Lower leg skin (tissue), 4 donors: ENCODE measurements at regions of chr11 and their contacts with region 1.

Region 1: GRCh38 chr11:83285771-83286528 is at the start of gene CCDC90B:
- DNase-seq: peak; percentile 97 to 99
- H3K4me3 ChIP-seq: peak within 1 kb of the TSS; percentile 77
- CTCF ChIP-seq: no peak
- POLR2A ChIP-seq: peak in 1 of 2 donors; percentile 60
- total RNA-seq, gene CCDC90B: 27.4 to 29.8 (median 28.9) TPM

Region 2: DNA sequence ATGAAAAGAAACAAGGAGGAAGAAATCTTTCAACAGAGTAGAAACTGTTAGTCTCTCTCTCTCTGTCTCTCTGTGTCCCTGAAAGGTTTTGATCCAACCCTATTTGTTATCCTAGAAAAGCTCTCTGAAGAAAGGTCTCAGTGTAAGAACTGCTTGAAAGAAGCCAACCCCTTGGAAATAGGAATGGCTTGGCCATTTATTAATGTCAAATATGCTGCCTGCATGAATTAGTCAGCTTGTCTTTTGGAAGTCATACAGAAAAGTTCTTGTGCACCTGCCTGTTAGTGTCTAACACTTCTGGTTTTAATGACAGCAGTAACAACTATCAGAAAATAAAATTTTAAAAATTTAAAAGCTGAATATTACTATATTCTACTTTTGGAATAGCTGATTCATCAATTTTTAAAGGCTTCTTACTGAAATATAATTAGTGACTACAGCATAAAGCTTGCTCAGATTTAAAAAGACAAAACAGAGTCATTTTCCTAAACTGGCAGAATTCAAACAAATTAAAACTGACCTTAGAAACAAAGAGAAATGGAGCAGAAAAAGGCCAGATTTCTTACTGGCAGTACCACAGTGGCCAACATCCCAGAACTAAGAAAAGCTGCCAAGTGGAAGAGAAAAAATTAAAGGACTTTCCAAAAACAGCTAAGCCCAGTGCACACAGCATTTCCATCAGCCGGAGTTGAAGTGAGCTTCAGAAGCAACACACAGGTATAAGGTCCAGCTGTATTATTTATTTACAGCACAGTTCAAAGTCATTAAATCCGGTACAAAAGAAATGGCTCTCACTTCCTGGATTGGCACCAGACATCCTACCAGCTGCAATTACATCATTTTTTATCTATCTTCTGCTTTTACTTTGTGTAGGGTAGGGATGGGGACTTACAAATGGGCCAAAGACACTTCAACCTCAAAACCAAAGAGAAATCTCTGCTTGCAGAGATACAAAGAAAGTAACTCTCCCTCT is 462.0 kb before region 1 on chr11:
- intact Hi-C with region 1: no loop called
- DNase-seq: no peak
- H3K4me3 ChIP-seq: no peak overlapping the region
- CTCF ChIP-seq: no peak
- POLR2A ChIP-seq: no peak

Region 3: GRCh38 chr11:83819933-83820549 is 534.1 kb after region 1 on chr11:
- intact Hi-C with region 1: loop called (anchors 10 kb)
- DNase-seq: no peak
- H3K4me3 ChIP-seq: no peak overlapping the region
- CTCF ChIP-seq: no peak
- POLR2A ChIP-seq: no peak